GM12878 (cell line): ENCODE measurements at regions of chr12 and their contacts with region 1.

Region 1: GRCh38 chr12:11746024-11746771 is 96.7 kb downstream of the ETV6 start:
- DNase-seq: peak; percentile 93
- ATAC-seq: peak; percentile 57
- H3K4me3 ChIP-seq: peak overlapping the region; percentile 17; the same call in 1 of the 2 replicates
- H3K27ac ChIP-seq: peak overlapping the region; percentile 100
- H3K4me1 ChIP-seq: peaks cover 88% of the 10 kb centered on the region
- H3K27me3 ChIP-seq: no peaks in the 10 kb centered on the region
- CTCF ChIP-seq: no peak
- EP300 ChIP-seq: peak; percentile 91 to 94
- POLR2A ChIP-seq: peak; percentile 46; the same call in 1 of the 2 replicates
- RAD21 ChIP-seq: peak; percentile 12; the same call in 1 of the 2 replicates

Region 2: DNA sequence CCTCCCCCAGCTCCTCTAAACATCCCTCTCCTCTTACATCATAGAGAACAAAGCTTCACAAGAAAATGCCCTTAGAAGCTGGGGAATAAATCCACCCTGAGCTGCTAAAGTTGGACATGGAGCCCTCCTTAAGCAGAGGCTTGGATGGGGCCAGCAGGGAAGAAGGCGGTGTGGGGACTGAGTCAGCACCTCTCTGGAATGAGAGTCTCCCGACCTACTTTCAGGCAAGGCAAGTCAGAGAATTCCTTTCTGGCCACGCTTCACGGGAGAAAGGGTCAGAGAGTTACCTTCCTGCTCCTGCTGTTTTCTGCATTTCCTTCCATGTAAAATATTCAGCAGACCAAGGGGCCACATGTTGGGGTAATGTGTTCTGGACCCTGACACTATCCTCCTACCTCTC is 237.5 kb before region 1 on chr12:
- CTCF ChIA-PET with region 1: no interaction called
- POLR2A ChIA-PET with region 1: no interaction called
- RAD21 ChIA-PET with region 1: no interaction called
- SMC1A ChIA-PET with region 1: no interaction called
- in situ Hi-C with region 1: no loop called
- intact Hi-C with region 1: no loop called
- DNase-seq: no peak
- ATAC-seq: no peak
- H3K4me3 ChIP-seq: no peak overlapping the region
- H3K27ac ChIP-seq: no peak overlapping the region
- H3K4me1 ChIP-seq: no peaks in the 10 kb centered on the region
- H3K27me3 ChIP-seq: no peaks in the 10 kb centered on the region
- CTCF ChIP-seq: no peak
- EP300 ChIP-seq: no peak
- POLR2A ChIP-seq: no peak
- RAD21 ChIP-seq: no peak

Region 3: DNA sequence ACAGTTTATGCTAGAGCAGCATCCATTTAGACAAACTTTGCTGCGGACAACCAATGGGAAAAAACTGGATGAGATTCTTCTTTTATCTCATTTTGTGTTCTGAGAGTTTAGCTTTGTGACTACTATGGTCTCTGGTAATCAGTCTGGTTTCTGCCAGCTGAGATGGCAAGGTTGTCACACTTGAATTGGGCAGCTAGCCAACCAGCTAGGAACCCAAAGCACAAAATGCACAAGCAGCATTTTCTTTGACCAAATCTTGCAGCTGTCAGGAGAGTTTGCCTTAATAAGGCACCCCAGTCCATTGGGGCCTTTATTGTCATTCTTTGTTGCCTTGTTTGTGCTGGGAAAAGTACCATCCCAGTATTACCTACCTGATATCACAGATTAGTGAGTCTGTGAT is 130.7 kb before region 1 on chr12:
- CTCF ChIA-PET with region 1: no interaction called
- POLR2A ChIA-PET with region 1: no interaction called
- RAD21 ChIA-PET with region 1: no interaction called
- SMC1A ChIA-PET with region 1: no interaction called
- in situ Hi-C with region 1: no loop called
- intact Hi-C with region 1: no loop called
- DNase-seq: no peak
- ATAC-seq: no peak
- H3K4me3 ChIP-seq: no peak overlapping the region
- H3K27ac ChIP-seq: no peak overlapping the region
- H3K4me1 ChIP-seq: no peaks in the 10 kb centered on the region
- H3K27me3 ChIP-seq: no peaks in the 10 kb centered on the region
- CTCF ChIP-seq: no peak
- EP300 ChIP-seq: no peak
- POLR2A ChIP-seq: no peak
- RAD21 ChIP-seq: no peak

Region 4: GRCh38 chr12:11648831-11649702 is 97.1 kb before region 1 on chr12 and contains the start of gene ETV6:
- CTCF ChIA-PET with region 1: no interaction called
- POLR2A ChIA-PET with region 1: interaction called, 8 read pairs
- RAD21 ChIA-PET with region 1: interaction called, 5 read pairs
- SMC1A ChIA-PET with region 1: interaction called, 26 read pairs
- in situ Hi-C with region 1: no loop called
- intact Hi-C with region 1: loop called (anchors 1 kb)
- DNase-seq: peak; percentile 86
- ATAC-seq: peak; percentile 31
- H3K4me3 ChIP-seq: peak within 1 kb of the TSS; percentile 85
- H3K27ac ChIP-seq: peak within 1 kb of the TSS; percentile 99
- H3K4me1 ChIP-seq: peaks cover 3% of the 10 kb centered on the region; the same call in 1 of the 2 replicates
- H3K27me3 ChIP-seq: no peaks in the 10 kb centered on the region
- CTCF ChIP-seq: no peak
- EP300 ChIP-seq: peak; percentile 33 to 46; a peak in 3 of 4 replicates
- POLR2A ChIP-seq: peak; percentile 80
- RAD21 ChIP-seq: no peak; the same call in 1 of the 2 replicates
- polyA plus RNA-seq, gene ETV6: 6.6 to 10.4 TPM

Region 5: DNA sequence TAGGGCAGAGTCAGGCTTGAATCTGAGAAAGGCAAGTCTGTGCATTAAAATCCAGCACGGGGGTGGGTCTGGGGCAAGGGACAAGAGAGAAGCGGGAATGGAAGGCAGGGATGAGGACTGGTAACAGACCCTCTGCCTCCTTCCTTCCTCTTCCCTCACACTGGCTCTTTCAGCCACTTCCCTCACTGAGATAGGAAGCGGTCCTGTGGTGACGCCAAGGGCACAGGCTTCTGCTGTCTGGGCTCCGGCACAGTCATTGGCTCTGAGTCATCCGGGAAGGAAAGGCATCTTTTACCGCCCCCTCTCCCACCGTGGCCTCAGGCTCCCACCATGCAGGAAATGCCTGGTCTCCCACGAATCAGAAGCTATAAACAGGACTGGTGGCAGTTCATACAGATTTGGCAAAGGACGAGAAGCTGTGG is 26.5 kb before region 1 on chr12:
- CTCF ChIA-PET with region 1: interaction called, 5 read pairs
- POLR2A ChIA-PET with region 1: interaction called, 30 read pairs
- RAD21 ChIA-PET with region 1: interaction called, 497 read pairs
- SMC1A ChIA-PET with region 1: interaction called, 433 read pairs
- in situ Hi-C with region 1: no loop called
- intact Hi-C with region 1: no loop called
- DNase-seq: no peak
- ATAC-seq: peak; percentile 12
- H3K4me3 ChIP-seq: no peak overlapping the region
- H3K27ac ChIP-seq: peak overlapping the region; percentile 83
- H3K4me1 ChIP-seq: peaks cover 78% of the 10 kb centered on the region
- H3K27me3 ChIP-seq: no peaks in the 10 kb centered on the region
- CTCF ChIP-seq: no peak
- EP300 ChIP-seq: no peak
- POLR2A ChIP-seq: peak; percentile 53; the same call in 1 of the 2 replicates
- RAD21 ChIP-seq: no peak

Region 6: GRCh38 chr12:11765817-11766794 is 19.9 kb after region 1 on chr12:
- CTCF ChIA-PET with region 1: interaction called, 46 read pairs
- POLR2A ChIA-PET with region 1: interaction called, 144 read pairs
- RAD21 ChIA-PET with region 1: interaction called, 399 read pairs
- SMC1A ChIA-PET with region 1: interaction called, 1,116 read pairs
- in situ Hi-C with region 1: no loop called
- intact Hi-C with region 1: loop called (anchors 1 kb)
- DNase-seq: peak; percentile 92
- ATAC-seq: peak; percentile 75
- H3K4me3 ChIP-seq: peak overlapping the region; percentile 11; the same call in 1 of the 2 replicates
- H3K27ac ChIP-seq: peak overlapping the region; percentile 100
- H3K4me1 ChIP-seq: peaks cover 92% of the 10 kb centered on the region
- H3K27me3 ChIP-seq: no peaks in the 10 kb centered on the region
- CTCF ChIP-seq: no peak
- EP300 ChIP-seq: peak; percentile 81 to 89
- POLR2A ChIP-seq: 0 out of 2 replicates have a peak, but pooled peaks have one; percentile 32
- RAD21 ChIP-seq: peak; percentile 19; the same call in 1 of the 2 replicates

Region 7: DNA sequence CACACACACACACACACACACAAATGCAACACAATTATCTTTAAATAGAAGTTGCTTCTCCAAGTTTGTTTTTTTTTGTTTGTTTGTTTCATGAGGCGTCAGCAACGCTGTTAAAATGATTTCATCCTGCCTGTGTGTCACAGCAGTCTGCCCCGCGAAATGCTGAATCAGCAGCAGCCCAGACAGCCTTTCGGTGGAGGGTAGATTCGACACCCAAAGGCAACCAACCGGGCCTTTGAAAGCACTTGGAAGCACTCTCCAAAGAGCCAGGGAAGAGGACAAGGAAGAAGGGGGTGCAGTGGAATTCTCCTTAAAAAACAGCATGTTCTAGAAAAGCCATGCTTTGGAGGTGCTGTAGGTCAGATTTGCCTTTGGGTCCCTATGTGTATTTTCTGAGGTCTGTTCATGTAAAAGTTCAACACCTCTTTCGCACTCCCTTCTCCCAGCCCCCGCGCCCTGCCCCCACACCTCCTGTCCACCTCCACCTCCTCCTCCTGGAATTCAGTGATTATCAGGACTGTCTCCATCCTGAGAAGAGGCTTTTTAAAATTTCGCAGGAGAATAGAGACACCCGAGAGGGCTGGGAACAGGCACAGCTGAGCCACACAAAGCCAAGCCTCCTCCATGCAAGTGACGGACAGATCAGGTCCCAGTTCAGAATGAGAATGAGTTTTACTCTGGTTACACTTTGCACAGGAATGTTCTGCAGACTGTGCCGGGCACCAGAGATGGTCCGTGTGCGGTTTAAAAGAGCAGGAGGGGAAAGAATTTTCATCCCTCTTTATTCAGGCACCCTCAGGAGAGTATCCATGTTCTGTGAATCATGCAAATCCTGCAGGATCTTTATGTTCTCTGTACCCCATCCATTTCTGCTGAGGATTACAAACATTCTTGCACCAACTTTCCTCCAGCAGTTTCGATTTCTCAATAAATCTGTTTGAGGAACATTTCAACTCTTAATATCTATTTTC is 81.2 kb after region 1 on chr12:
- CTCF ChIA-PET with region 1: no interaction called
- POLR2A ChIA-PET with region 1: interaction called, 4 read pairs
- RAD21 ChIA-PET with region 1: interaction called, 13 read pairs
- SMC1A ChIA-PET with region 1: interaction called, 6 read pairs
- in situ Hi-C with region 1: no loop called
- intact Hi-C with region 1: no loop called
- DNase-seq: no peak
- ATAC-seq: no peak
- H3K4me3 ChIP-seq: no peak overlapping the region
- H3K27ac ChIP-seq: 0 out of 2 replicates have a peak overlapping the region, but pooled peaks have one; percentile 6
- H3K4me1 ChIP-seq: peaks cover 64% of the 10 kb centered on the region
- H3K27me3 ChIP-seq: no peaks in the 10 kb centered on the region
- CTCF ChIP-seq: no peak
- EP300 ChIP-seq: no peak
- POLR2A ChIP-seq: no peak
- RAD21 ChIP-seq: no peak